MCF 10A (cell line): ENCODE measurements at regions of chr3 and their contacts with region 1.

Region 1: GRCh38 chr3:123584988-123585937 is at the start of gene HACD2:
- DNase-seq: peak; percentile 98
- H3K4me3 Mint-ChIP-seq: no peak within 1 kb of the TSS
- H3K27ac Mint-ChIP-seq: no peak within 1 kb of the TSS
- H3K4me1 Mint-ChIP-seq: peaks cover 30% of the 10 kb centered on the region
- H3K27me3 Mint-ChIP-seq: no peaks in the 10 kb centered on the region
- CTCF ChIP-seq: no peak
- total RNA-seq, gene HACD2: 76.5 and 97.7 TPM in 2 replicates

Region 2: GRCh38 chr3:123113889-123114450 is 471.3 kb before region 1 on chr3:
- CTCF ChIA-PET with region 1: no interaction called
- POLR2A ChIA-PET with region 1: no interaction called
- intact Hi-C with region 1: no loop called
- DNase-seq: no peak
- H3K4me3 Mint-ChIP-seq: no peak overlapping the region
- H3K27ac Mint-ChIP-seq: no peak overlapping the region
- H3K4me1 Mint-ChIP-seq: no peaks in the 10 kb centered on the region
- H3K27me3 Mint-ChIP-seq: no peaks in the 10 kb centered on the region
- CTCF ChIP-seq: no peak

Region 3: DNA sequence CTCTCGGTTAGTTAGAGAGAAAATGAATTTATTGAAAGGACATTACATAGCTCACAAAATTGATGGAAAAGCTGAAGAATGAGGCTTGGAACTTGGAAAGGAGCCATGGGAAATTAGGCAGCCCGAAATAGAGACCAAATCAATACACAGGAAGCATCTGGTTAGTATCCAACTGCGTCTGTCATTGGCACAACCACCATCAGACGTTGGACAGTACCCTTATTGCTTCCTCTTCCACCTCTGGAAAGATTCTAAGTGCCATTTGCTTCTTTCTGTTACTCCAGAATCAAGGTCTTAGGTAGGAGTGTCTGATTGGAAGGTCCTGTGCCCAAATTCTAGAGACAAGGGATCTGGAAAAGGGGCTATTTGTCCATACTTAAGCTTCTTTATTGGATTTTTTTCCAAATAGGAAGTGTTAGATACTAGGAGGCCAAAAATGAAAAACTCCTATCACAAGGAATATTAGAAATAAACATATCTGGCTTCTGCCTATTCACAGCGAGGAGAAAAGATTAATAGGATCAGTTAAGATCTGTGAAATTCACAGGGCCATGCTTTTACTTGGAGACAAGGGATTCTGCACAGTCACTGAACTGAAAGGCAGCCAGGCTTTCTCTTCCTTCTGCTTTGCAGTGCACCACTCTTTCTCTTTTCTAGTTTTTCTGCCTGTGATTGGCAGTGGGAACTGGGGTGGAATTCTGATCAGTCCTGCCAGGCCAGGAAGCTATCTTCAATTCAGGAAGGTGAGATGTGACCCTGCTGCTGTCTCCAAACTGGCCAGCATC is 10.3 kb after region 1 on chr3:
- CTCF ChIA-PET with region 1: interaction called, 7 read pairs
- POLR2A ChIA-PET with region 1: interaction called, 381 read pairs
- intact Hi-C with region 1: no loop called
- DNase-seq: no peak
- H3K4me3 Mint-ChIP-seq: no peak overlapping the region
- H3K27ac Mint-ChIP-seq: no peak overlapping the region
- H3K4me1 Mint-ChIP-seq: peaks cover 25% of the 10 kb centered on the region
- H3K27me3 Mint-ChIP-seq: no peaks in the 10 kb centered on the region
- CTCF ChIP-seq: no peak

Region 4: GRCh38 chr3:123618768-123619484 is 33.7 kb after region 1 on chr3:
- CTCF ChIA-PET with region 1: interaction called, 14 read pairs
- POLR2A ChIA-PET with region 1: interaction called, 210 read pairs
- intact Hi-C with region 1: loop called (anchors 5 kb)
- DNase-seq: peak; percentile 88
- H3K4me3 Mint-ChIP-seq: peak overlapping the region; percentile 60
- H3K27ac Mint-ChIP-seq: peak overlapping the region; percentile 40
- H3K4me1 Mint-ChIP-seq: peaks cover 31% of the 10 kb centered on the region
- H3K27me3 Mint-ChIP-seq: no peaks in the 10 kb centered on the region
- CTCF ChIP-seq: no peak

Region 5: GRCh38 chr3:123688241-123688747 is 103.0 kb after region 1 on chr3:
- CTCF ChIA-PET with region 1: no interaction called
- POLR2A ChIA-PET with region 1: no interaction called
- intact Hi-C with region 1: no loop called
- DNase-seq: peak; percentile 76
- H3K4me3 Mint-ChIP-seq: no peak overlapping the region
- H3K27ac Mint-ChIP-seq: no peak overlapping the region
- H3K4me1 Mint-ChIP-seq: peaks cover 17% of the 10 kb centered on the region
- H3K27me3 Mint-ChIP-seq: no peaks in the 10 kb centered on the region
- CTCF ChIP-seq: no peak

Region 6: DNA sequence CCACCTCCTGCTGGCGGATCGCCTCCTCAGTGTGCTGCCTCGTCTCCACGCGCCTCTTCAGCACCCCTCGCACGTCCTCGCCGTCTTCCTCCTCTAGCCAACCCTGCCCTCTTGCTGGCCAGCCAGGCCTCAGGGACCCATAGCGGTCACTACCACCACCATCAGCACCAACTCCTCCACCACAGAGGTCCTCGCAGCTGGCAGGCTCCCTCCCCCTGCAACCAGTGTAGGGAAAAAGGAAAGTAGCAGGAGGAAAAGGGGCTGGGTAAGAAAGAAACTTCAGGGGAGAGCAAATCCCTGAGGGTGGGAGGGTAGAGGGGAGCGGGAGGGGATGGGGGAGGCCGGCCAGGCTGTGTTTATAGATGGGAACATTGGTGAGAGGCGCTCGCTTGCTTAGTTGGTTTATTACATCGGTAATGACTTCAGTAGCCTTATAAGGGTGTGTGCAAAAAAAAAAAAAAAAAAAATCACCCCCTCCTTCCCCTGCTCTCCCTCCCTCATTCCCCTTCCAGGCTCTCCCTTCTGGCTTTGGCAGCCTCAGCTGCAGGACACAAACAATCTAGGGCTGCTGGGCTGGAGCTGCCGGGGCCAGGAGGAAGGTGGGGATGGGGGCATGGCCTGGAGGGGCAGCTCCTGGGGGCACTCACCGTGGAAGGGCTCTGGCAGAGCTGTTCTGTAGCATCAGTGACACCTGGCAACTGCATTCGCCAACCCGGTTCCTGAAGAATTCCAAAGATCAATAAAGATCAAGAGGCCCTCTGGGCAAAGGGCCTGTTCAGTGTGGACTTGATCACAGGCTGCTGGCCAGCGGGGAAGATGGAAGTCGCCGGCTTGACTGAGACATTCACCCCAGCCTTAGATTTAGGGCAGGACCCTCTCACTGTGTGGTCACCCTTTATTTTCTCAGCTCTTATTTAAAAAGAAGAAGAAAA is 115.8 kb after region 1 on chr3:
- CTCF ChIA-PET with region 1: interaction called, 5 read pairs
- POLR2A ChIA-PET with region 1: interaction called, 3 read pairs
- intact Hi-C with region 1: loop called (anchors 5 kb)
- DNase-seq: no peak
- H3K4me3 Mint-ChIP-seq: no peak overlapping the region
- H3K27ac Mint-ChIP-seq: no peak overlapping the region
- H3K4me1 Mint-ChIP-seq: peaks cover 5% of the 10 kb centered on the region
- H3K27me3 Mint-ChIP-seq: no peaks in the 10 kb centered on the region
- CTCF ChIP-seq: no peak